Head of caudate nucleus (tissue), 42 donors: ENCODE measurements at regions of chr1 and their contacts with region 1.

Region 1: DNA sequence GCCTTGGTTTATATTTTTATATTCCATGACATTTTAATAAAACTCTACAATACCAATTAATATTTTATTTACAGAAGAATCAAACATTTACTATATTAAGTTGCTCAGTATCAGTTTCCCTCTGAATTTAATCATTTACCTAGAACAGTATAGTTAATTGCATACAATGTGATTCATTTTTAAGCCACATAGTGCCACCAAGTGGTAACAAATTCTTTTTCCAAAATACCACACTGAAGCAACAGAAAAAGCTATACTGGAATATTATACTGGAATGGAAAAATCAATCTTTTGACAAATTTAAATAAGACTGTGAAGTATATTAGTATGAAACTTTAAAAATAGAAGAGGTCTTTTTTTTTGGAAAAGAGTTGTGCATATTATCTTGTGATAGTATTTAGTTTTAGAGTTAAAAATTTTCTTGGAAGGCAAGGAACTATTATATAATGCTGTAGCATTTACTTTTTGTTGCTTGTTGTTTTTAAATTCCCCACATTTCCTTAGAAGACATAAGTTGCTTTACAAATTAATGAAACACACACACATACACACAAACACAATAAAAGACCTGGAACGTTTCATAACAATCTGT is 57.3 kb downstream of the ZNF644 start:
- DNase-seq: peak in 1 of 42 donors; percentile 33

Region 2: GRCh38 chr1:90580176-90580575 is 384.4 kb before region 1 on chr1:
- intact Hi-C with region 1: loop called (anchors 10 kb)
- DNase-seq: no peak

Region 3: DNA sequence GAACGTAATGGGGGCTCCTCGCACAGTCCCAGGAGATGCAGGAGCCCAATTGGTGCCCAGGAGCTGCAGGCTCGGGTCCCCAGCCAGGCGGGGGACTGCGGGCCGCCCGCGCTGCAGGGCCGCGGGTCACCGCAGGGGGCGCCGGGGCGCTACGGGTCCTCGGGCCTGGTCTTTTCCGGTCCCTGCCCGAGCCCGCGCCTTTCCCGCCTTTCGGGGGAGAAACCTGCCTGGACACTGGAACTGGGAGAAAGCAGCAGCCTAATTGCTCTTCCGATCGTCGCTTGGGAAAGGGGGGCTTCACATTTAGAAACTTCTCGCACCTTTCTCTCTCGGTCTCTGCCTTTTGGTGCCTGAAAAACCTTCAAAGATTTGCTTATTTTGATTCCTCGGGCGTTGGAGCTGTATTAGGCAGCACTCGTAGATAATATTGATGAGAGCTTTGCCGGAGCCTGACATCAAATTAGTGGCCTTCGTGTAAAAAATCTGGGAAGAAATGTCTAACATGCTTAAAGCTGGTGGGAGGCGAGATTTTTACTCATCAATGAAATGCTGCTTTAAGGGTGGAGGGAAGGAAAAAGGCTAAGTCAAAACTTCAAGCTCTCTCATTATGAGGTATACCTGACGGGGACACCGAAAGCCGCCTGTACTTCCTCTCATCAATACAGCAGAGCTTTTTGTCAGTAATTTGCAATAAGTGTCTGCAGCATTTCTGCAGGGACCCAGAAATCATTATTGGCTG is 234.9 kb before region 1 on chr1:
- intact Hi-C with region 1: loop called (anchors 5 kb)
- DNase-seq: peak in 1 of 42 donors; percentile 40